ENCODE measurements at regions of chr16 and their contacts with region 1.

Region 1: DNA sequence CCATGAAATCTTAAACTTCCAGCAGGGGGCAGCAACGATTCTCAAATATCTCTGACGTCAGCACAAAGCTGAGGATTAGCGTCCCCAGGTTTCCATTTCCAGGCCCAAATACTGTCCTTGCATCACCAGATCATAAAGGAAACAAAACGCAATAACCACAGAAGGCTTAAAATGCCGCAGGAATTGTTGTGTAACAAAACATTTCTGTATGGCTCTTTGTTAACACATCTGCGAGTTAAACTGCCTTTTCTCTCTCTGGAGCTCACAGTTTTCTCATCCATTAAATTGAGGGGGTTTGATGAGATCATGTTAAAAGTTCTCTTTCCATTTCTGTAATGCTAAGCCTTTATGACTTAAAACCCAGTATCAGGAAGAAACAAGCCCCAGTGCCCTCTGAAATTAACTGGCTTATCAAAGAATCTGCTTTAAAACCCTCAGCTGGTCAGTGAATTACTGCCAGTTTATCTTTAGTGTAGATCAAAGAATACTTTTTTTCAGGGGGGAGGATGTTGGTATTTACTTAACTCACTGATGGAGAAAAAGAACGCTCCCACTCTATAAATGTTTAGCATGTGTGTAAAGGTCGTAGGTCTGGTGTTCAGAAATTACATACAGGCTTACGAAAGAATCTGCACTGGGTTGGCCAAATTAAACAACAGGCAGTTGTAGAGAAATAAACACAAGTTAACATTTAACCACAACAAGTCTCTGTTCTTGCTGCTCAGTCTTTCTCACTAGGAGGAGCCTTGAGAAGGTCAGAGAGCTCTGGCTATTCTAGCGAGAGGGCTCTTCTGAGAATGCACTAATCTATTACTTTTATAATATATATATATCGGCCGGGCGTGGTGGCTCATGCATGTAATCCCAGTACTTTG is 10.6 kb upstream of the TERF2 start:
- DNase-seq: peak; percentile 84
- ATAC-seq: peak; percentile 66
- H3K4me3 Mint-ChIP-seq: no peak overlapping the region
- H3K27ac Mint-ChIP-seq: peak overlapping the region; percentile 76
- H3K4me1 Mint-ChIP-seq: peaks cover 24% of the 10 kb centered on the region
- H3K27me3 Mint-ChIP-seq: peaks cover 3% of the 10 kb centered on the region
- CTCF ChIP-seq: peak; percentile 47

Region 2: DNA sequence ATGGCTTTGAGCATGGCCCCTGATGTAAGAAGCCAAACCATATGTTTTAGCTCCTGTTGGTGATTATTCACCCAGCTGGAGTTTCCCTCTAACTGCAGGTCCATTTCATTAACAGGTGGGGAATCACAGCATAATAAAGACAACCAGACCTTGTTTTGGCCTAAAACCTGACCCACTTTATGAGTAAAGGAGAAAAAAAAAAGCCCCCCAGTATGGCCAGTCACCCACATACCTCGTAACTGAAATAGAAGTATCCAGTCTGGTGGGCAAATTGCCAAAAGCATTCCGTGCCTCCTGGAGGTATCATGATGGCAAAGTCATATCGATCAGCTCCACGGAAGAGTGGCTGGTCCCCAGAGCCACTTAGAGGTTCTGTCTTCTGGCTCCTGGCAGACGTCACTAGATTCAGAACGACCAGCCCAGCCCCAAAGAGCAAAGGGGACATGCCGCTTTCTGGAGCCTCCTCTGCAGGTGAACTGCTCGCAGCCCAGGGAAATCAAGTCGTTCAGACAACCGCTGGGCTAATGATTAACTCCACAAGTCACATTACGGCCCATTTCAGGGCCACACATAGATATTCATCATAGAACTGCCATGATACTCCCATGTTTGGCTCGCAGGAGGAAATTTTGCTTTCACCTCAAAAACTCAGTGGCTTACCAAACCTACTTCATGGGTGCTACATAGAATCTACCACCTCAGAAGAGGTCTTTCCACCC is 45.0 kb before region 1 on chr16 and contains the start of gene TMED6:
- CTCF ChIA-PET with region 1: no interaction called
- POLR2A ChIA-PET with region 1: no interaction called
- intact Hi-C with region 1: no loop called
- DNase-seq: no peak
- ATAC-seq: no peak
- H3K4me3 Mint-ChIP-seq: no peak within 1 kb of the TSS
- H3K27ac Mint-ChIP-seq: peak within 1 kb of the TSS; percentile 39
- H3K4me1 Mint-ChIP-seq: peaks cover 2% of the 10 kb centered on the region
- H3K27me3 Mint-ChIP-seq: no peaks in the 10 kb centered on the region
- CTCF ChIP-seq: no peak
- total RNA-seq, gene TMED6: 1.2 to 2.2 TPM

Region 3: GRCh38 chr16:69410285-69410990 is 14.0 kb after region 1 on chr16:
- CTCF ChIA-PET with region 1: interaction called, 50 read pairs
- POLR2A ChIA-PET with region 1: interaction called, 3 read pairs
- intact Hi-C with region 1: no loop called
- DNase-seq: no peak
- ATAC-seq: no peak
- H3K4me3 Mint-ChIP-seq: no peak overlapping the region
- H3K27ac Mint-ChIP-seq: peak overlapping the region; percentile 53
- H3K4me1 Mint-ChIP-seq: peaks cover 16% of the 10 kb centered on the region
- H3K27me3 Mint-ChIP-seq: no peaks in the 10 kb centered on the region
- CTCF ChIP-seq: no peak

Region 4: DNA sequence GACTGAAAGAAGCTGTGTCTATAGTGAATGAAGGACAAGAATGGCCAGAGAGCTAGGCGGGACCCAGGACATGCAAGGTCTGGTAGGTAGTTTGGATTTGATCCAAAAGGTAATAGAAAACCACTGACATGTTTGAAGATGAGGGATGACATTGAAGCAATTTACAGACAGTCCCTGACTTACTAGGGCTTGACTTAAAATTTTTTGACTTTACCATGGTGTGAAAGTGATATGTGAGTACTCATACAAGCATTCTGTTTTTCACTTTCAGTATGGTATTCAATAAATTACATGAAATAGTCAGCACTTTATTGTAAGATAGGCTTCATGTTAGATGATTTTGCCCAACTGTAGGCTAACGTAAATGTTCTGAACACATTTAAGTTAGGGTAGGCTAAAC is 35.6 kb after region 1 on chr16:
- CTCF ChIA-PET with region 1: interaction called, 12 read pairs
- POLR2A ChIA-PET with region 1: no interaction called
- intact Hi-C with region 1: no loop called
- DNase-seq: no peak
- ATAC-seq: peak; percentile 35
- H3K4me3 Mint-ChIP-seq: no peak overlapping the region
- H3K27ac Mint-ChIP-seq: peak overlapping the region; percentile 21
- H3K4me1 Mint-ChIP-seq: peaks cover 60% of the 10 kb centered on the region
- H3K27me3 Mint-ChIP-seq: no peaks in the 10 kb centered on the region
- CTCF ChIP-seq: no peak

Region 5: DNA sequence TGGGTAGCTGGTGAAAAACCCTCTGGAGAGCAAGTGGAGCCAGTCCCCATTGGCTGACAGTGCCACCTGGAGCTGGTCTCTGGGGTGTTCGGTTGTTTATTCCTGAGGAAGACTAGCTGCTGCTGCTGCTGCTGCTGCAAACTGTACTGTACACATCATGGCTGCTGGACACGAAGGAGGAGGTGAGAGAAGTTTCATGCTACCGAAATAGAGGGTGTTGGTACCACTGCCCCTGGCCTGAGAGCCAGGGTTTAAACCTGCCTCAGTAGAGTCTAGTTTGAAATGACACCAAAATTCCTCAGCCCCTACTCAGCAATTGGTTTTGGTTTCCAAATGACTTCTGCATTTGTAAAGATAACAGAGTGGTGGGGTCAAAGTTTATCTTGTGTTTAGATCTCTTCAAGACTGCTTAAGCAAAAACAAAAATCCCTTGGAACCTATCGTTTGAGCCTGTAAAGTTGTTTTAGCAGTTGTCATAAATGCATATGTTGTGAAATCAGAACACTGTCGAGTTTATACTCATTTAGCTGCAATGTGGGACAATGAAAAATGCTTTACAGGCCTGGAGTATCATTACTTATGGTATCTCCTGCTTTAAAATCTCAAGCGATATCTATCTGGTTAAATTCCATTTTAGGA is 68.8 kb after region 1 on chr16:
- CTCF ChIA-PET with region 1: interaction called, 14 read pairs
- POLR2A ChIA-PET with region 1: interaction called, 5 read pairs
- intact Hi-C with region 1: no loop called
- DNase-seq: peak; percentile 29
- ATAC-seq: peak; percentile 55
- H3K4me3 Mint-ChIP-seq: no peak overlapping the region
- H3K27ac Mint-ChIP-seq: peak overlapping the region; percentile 79
- H3K4me1 Mint-ChIP-seq: peaks cover 60% of the 10 kb centered on the region
- H3K27me3 Mint-ChIP-seq: no peaks in the 10 kb centered on the region
- CTCF ChIP-seq: no peak

Region 6: GRCh38 chr16:69565671-69566239 is 169.3 kb after region 1 on chr16 and contains the start of gene NFAT5:
- CTCF ChIA-PET with region 1: interaction called, 18 read pairs
- POLR2A ChIA-PET with region 1: interaction called, 17 read pairs
- intact Hi-C with region 1: loop called (anchors 2 kb)
- DNase-seq: peak; percentile 90
- ATAC-seq: peak; percentile 54
- H3K4me3 Mint-ChIP-seq: peak within 1 kb of the TSS; percentile 100
- H3K27ac Mint-ChIP-seq: peak within 1 kb of the TSS; percentile 99
- H3K4me1 Mint-ChIP-seq: peaks cover 49% of the 10 kb centered on the region
- H3K27me3 Mint-ChIP-seq: no peaks in the 10 kb centered on the region
- CTCF ChIP-seq: no peak
- total RNA-seq, gene NFAT5: 36.0 to 37.8 TPM

Region 7: GRCh38 chr16:69647020-69647419 is 250.6 kb after region 1 on chr16:
- CTCF ChIA-PET with region 1: interaction called, 16 read pairs
- POLR2A ChIA-PET with region 1: no interaction called
- intact Hi-C with region 1: no loop called
- DNase-seq: no peak
- ATAC-seq: no peak
- H3K4me3 Mint-ChIP-seq: no peak overlapping the region
- H3K27ac Mint-ChIP-seq: no peak overlapping the region
- H3K4me1 Mint-ChIP-seq: peaks cover 3% of the 10 kb centered on the region
- H3K27me3 Mint-ChIP-seq: no peaks in the 10 kb centered on the region
- CTCF ChIP-seq: no peak